ENCODE measurements at regions of chr1 and their contacts with region 1.

Region 1: GRCh38 chr1:110495926-110496600 is 22.9 kb downstream of the KCNA10 start:
- DNase-seq: peak; percentile 59 to 86 (median 72)
- ATAC-seq: peak; percentile 84
- H3K4me3 ChIP-seq: no peak overlapping the region
- H3K4me3 Mint-ChIP-seq: no peak overlapping the region
- H3K27ac ChIP-seq: no peak overlapping the region
- H3K27ac Mint-ChIP-seq: no peak overlapping the region
- H3K4me1 ChIP-seq: no peaks in the 10 kb centered on the region
- H3K4me1 Mint-ChIP-seq: no peaks in the 10 kb centered on the region
- H3K27me3 ChIP-seq: no peaks in the 10 kb centered on the region
- H3K27me3 Mint-ChIP-seq: no peaks in the 10 kb centered on the region
- CTCF ChIP-seq: peak; percentile 95

Region 2: DNA sequence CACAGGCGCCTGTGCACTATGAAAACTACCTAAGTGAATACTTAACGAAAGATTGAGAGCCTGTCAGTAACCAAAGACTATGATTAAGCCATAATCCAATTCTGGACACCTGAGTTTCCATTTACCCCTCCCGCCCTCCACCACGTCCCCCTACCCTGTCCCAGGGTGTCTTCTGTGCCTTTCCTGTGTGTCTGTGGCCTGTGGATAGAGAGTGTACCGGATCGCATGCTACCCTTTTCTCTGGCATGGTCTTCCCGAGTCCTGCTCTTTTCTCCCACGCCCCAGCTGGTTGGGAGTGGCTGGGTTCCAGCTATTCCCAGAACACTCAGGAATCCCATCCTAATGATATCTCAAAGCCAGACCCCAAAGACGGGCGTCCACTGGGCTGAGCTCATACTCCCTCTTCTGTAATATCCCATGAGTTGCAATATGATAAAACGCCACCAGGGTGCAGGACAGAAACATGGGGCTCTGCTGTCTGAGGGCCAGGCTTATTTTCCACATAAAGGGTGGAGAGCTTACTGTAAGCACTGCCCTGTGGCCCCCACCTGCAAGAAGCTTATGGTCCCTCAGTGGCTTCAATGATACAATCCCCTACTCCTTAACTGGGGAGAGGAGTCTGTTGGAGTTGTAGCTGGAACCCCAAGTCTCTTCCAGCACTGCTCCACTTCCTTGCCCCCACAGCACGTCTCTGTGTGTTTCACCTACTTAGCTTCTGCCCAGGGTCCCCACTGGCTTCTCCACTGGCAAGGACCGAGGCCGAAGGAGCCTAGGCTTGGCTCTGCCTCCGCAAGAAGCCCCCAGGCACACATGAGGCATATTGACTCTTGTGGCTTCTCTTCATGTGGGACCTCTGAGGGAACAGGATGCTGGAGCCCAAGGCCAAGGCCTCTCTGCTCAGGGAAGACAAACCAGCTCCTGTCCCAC is 408.0 kb before region 1 on chr1:
- CTCF ChIA-PET with region 1: interaction called, 3 read pairs
- POLR2A ChIA-PET with region 1: no interaction called
- intact Hi-C with region 1: loop called in 1 of 2 experiments (anchors 1 kb)
- DNase-seq: peak in 9 of 14 experiments; percentile 18 to 70 (median 33)
- ATAC-seq: peak; percentile 73
- H3K4me3 ChIP-seq: no peak overlapping the region
- H3K4me3 Mint-ChIP-seq: peak overlapping the region; percentile 36
- H3K27ac ChIP-seq: no peak overlapping the region
- H3K27ac Mint-ChIP-seq: no peak overlapping the region
- H3K4me1 ChIP-seq: peaks cover 19% of the 10 kb centered on the region
- H3K4me1 Mint-ChIP-seq: peaks cover 6% of the 10 kb centered on the region
- H3K27me3 ChIP-seq: peaks cover 26 to 32% of the 10 kb centered on the region in 2 experiments
- H3K27me3 Mint-ChIP-seq: peaks cover 53% of the 10 kb centered on the region
- CTCF ChIP-seq: peak; percentile 60

Region 3: DNA sequence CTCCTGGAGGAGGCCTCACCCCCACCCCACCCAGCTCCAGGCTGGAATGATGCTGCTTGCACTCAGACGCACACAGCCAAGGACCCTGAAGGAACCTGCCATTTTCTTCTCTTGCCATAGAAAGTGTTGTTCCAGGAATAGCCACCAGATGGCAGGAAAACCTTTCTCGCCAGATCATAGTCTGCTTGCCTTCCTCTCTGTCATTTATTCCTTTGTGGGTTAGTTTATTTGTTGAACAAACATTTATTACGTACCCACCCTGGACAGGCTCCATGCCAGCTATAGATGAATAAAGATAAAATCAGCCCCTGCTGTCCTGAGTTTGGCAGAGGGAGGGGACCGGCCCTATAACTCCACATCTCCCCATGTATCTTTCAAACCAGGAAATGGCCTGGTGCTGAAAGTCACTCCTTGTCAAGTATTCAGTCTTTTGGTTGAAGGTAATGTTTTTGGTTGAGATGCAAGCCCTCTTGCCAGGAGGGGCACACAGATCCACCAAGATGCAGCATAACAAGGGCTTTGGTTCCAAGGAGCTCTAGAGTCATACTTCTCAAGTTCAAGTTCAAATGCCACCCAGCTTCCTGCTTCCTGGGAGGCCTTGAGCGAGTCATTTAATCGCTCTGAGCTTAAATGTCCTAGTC is 292.9 kb before region 1 on chr1:
- CTCF ChIA-PET with region 1: interaction called, 12 read pairs
- POLR2A ChIA-PET with region 1: interaction called, 4 read pairs
- intact Hi-C with region 1: loop called (anchors 1 to 10 kb)
- DNase-seq: peak; percentile 22 to 88 (median 60)
- ATAC-seq: peak; percentile 76
- H3K4me3 ChIP-seq: no peak overlapping the region
- H3K4me3 Mint-ChIP-seq: no peak overlapping the region
- H3K27ac ChIP-seq: peak overlapping the region in 1 of 2 donors; percentile 30
- H3K27ac Mint-ChIP-seq: peak overlapping the region; percentile 90
- H3K4me1 ChIP-seq: peaks cover 24% of the 10 kb centered on the region
- H3K4me1 Mint-ChIP-seq: peaks cover 36% of the 10 kb centered on the region
- H3K27me3 ChIP-seq: no peaks in the 10 kb centered on the region
- H3K27me3 Mint-ChIP-seq: no peaks in the 10 kb centered on the region
- CTCF ChIP-seq: peak; percentile 78

Region 4: DNA sequence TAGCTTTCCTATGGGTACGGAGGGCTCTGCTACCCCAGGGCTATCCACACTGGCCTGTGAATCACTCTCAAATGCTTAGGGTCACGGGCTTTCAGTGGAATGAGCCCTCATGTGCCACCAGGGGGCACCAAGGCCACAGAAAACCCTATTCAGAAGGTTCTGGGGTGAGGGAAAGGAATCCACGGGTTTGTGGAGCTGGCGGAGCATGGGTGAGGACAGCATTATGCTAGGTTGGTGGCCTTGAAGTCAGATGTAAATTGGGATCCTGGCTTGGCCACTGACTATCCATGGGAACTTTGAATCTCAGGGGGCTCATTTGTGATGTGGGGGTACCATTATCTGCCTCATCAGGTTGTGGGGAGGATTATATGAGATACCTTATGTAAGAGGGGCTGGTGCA is 83.5 kb before region 1 on chr1:
- CTCF ChIA-PET with region 1: interaction called, 7 read pairs
- POLR2A ChIA-PET with region 1: no interaction called
- intact Hi-C with region 1: loop called (anchors 2 to 5 kb)
- DNase-seq: peak; percentile 24 to 81 (median 52)
- ATAC-seq: peak; percentile 57
- H3K4me3 ChIP-seq: no peak overlapping the region
- H3K4me3 Mint-ChIP-seq: no peak overlapping the region
- H3K27ac ChIP-seq: no peak overlapping the region
- H3K27ac Mint-ChIP-seq: no peak overlapping the region
- H3K4me1 ChIP-seq: peaks cover 15% of the 10 kb centered on the region
- H3K4me1 Mint-ChIP-seq: peaks cover 18% of the 10 kb centered on the region
- H3K27me3 ChIP-seq: no peaks in the 10 kb centered on the region
- H3K27me3 Mint-ChIP-seq: no peaks in the 10 kb centered on the region
- CTCF ChIP-seq: peak; percentile 77

Measured in CD4-positive, alpha-beta T cell (primary cell).